ENCODE measurements at regions of chr18 and their contacts with region 1.

Region 1: DNA sequence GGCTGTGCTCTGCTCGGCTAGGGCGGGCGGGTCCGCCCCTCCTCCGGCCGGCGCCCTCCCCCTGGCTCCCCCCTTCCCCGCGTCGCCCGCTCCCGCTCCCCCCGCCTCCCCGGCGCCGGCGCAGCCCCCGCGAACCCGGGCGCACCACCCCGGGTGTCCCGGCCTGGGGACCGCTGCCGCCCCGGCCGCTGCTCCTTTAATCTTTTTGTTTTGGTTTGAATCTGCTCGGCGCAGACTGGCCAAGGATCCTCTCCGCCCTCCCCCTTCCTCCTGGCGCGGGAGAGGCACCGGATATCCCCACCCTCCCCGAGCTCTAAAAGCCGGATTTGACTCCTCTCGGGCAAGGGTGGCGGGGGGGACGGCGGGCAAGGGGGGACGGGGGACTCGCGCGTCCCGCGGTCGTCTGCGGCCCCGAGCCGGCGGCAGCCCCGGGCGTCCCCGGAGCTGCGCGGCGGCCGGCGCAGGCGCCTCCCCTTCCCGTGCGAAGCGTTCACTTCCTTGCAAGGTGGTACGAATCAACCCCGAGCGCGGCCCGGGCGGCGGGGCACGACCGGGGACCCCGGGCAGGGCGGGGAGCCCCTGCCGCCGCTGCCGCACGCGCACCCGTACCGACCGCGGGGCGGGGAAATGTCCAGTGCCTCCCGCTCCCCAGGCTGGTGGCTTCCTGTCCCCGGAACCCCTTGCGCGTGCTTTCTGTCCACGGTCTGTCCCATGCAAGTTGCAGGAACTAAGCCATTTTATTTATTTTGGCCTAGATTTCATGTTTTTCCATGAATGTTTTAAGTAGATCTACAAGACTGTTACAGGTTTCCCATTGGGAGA is at the start of gene PTGR3:
- DNase-seq: peak; percentile 44
- H3K4me3 ChIP-seq: peak within 1 kb of the TSS; percentile 74 to 96 (median 82)
- H3K27ac ChIP-seq: peak within 1 kb of the TSS; percentile 96 to 99 (median 97)
- H3K4me1 ChIP-seq: peaks cover 33 to 71% (median 37%) of the 10 kb centered on the region in 3 donors
- H3K27me3 ChIP-seq: no peaks in the 10 kb centered on the region
- CTCF ChIP-seq: no peak
- POLR2A ChIP-seq: peak in 2 of 4 donors; percentile 10 to 70
- total RNA-seq, gene PTGR3: 12.2 to 25.2 (median 16.7) TPM

Region 2: DNA sequence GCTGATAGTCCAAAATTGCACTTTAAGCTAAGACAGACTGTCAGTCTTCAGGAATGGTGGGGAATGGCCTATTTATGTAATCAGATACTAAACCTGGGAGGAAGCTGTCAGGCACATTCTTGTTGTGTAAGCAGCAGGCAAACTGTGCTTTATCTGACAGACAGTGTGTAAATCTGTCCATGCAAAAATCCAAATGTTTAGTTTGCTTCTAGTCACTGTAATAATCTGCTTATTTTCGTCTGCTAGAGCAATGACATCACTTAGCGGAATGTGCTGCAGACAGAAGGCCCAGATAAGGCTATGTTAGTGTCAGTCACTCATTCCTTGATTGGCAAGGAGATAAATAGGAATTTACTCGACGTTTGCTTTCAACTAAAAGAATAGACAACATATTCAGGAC is 348.2 kb before region 1 on chr18:
- intact Hi-C with region 1: no loop called
- DNase-seq: no peak
- H3K4me3 ChIP-seq: no peak overlapping the region
- H3K27ac ChIP-seq: no peak overlapping the region
- H3K4me1 ChIP-seq: no peaks in the 10 kb centered on the region
- H3K27me3 ChIP-seq: no peaks in the 10 kb centered on the region
- CTCF ChIP-seq: no peak
- POLR2A ChIP-seq: no peak

Region 3: DNA sequence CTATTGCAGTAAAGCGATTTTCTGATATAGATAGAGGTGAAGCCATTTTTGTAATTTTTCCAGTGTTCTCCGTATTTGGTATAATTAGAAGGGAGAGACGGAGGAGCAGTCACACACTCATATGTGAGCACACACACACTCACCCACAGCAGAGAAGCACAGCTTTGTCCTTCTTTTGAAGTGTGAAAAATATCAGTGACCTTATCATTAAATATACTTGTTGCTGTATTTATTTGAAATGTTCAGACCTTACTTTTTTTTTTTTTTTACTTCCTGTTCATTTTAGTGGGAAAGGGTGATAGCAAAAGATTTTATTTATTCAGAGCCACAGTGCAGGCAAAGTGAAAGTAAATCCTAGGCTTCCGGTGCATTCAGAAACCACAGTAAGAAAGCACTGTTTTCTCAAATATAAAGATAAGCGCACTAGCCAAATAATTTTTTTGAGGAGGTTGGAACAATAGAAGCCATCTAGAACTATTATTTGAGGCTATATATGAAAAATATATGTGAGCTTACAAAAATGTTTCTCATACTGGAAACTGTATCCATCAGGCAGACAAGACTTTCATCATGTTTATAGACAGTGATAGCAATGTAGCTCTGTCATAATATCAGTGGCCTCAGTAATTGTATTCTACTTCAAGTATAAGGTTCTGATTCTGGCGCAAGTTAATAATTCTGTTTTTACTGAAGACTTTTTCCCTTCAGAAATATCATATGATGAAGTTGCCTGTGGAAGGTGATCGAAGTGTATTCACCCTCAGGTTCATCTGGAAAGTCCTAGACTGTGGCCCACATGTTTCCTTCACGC is 38.5 kb after region 1 on chr18:
- intact Hi-C with region 1: loop called (anchors 5 kb)
- DNase-seq: no peak
- H3K4me3 ChIP-seq: peak overlapping the region; percentile 23 to 63 (median 42)
- H3K27ac ChIP-seq: peak overlapping the region; percentile 62 to 89 (median 86)
- H3K4me1 ChIP-seq: peaks cover 19 to 86% (median 25%) of the 10 kb centered on the region in 3 donors
- H3K27me3 ChIP-seq: no peaks in the 10 kb centered on the region
- CTCF ChIP-seq: no peak
- POLR2A ChIP-seq: no peak

Region 4: GRCh38 chr18:76822510-76823160 is 1613.3 kb after region 1 on chr18 and contains the start of gene ZNF236:
- intact Hi-C with region 1: loop called (anchors 10 kb)
- DNase-seq: no peak
- H3K4me3 ChIP-seq: peak within 1 kb of the TSS; percentile 84 to 91 (median 86)
- H3K27ac ChIP-seq: peak within 1 kb of the TSS; percentile 90 to 100 (median 96)
- H3K4me1 ChIP-seq: peaks cover 18 to 54% (median 22%) of the 10 kb centered on the region in 3 donors
- H3K27me3 ChIP-seq: no peaks in the 10 kb centered on the region
- CTCF ChIP-seq: no peak
- POLR2A ChIP-seq: peak in 3 of 4 donors; percentile 34 to 85 (median 81)
- total RNA-seq, gene ZNF236: 6.2 to 16.5 (median 10.7) TPM